Dorsolateral prefrontal cortex (tissue), 120 donors: ENCODE measurements at regions of chr15 and their contacts with region 1.

Region 1: DNA sequence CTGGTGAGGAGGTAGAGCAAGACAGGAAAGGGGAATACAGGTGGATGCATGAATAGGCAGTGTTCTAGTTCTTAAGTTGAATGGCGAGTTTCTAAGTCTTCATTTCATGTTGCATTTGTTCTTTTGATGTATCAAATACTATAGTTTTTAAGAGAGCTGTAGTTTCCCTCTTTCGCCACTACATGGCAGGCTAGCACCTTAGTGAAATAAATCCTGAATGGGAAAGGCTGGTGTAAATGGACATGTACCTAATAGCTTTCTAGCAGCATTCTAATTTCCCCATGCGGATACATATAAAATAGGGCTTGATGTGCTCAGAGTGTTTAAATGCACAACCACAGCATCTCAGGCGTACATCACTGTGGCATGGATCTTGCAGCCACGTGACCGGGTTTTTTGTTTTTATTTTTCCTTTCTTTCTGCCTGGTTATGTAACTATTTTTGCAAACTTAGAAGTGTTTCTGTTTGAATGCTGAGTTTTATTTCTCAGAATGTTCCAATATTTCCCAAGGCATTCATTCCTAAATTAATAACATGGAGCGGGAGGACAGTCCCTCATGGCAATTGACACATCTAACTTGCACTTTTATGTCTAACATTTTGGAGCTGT is 23.5 kb upstream of the CLN6 start:
- DNase-seq: peak in 2 of 10 donors; percentile 29 to 63
- H3K4me3 ChIP-seq: peak overlapping the region in 44 of 59 donors; percentile 17 to 63 (median 37)
- H3K27ac ChIP-seq: peak overlapping the region in 28 of 59 donors; percentile 1 to 70 (median 27)
- H3K27me3 ChIP-seq: no peaks in the 10 kb centered on the region
- CTCF ChIP-seq: peak; percentile 77 to 98 (median 92)

Region 2: DNA sequence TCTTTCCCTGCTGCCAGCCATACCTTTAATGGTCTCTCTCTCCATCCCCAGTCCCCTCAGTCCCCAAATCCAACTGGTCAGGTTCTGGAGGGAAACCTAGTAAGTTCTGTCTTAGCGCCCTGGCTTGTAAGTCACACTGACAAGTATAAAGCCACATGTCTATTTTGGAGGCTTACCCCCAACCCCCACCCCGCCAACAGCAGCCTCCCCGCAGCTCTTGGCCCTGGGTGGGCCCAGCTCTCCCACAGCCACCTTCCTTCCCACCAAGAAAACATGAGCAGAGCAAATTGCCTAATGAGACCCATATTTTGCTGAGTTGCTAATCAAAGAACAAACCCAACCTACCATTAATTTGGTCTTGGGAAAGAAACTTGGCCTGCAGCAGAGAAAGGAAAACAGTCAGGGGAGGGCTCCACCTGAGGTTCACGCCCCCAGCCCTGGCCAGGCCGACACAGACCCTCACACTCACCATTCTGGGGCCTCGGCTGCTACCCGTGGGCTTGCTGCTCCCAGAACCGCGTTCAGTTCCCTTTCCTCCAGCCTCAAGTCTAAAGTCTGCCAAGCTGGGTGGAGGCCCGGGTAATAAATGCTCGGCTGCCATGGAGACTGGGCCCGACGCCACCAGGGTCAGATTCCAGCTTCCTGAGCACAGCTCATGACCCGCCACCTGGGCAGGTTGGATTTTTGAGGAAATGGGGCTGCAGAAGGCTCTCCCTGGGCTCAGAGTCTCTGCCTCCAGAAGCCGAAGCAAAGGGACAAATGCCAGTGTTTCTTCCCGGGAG is 48.1 kb before region 1 on chr15 and contains the start of gene CALML4:
- intact Hi-C with region 1: no loop called
- DNase-seq: peak in 3 of 10 donors; percentile 42 to 84 (median 49)
- H3K4me3 ChIP-seq: peak within 1 kb of the TSS in 29 of 59 donors; percentile 1 to 42 (median 20)
- H3K27ac ChIP-seq: peak within 1 kb of the TSS in 6 of 59 donors; percentile 13 to 55 (median 31)
- H3K27me3 ChIP-seq: no peaks in the 10 kb centered on the region
- CTCF ChIP-seq: no peak
- total RNA-seq, gene CALML4: 1.2 to 12.9 (median 4.6) TPM

Region 3: GRCh38 chr15:68277603-68278344 is 24.7 kb after region 1 on chr15 and contains the start of gene FEM1B:
- intact Hi-C with region 1: loop called (anchors 1 to 2 kb)
- DNase-seq: peak; percentile 78 to 93 (median 88)
- H3K4me3 ChIP-seq: peak within 1 kb of the TSS; percentile 63 to 100 (median 94)
- H3K27ac ChIP-seq: peak within 1 kb of the TSS; percentile 95 to 100 (median 99)
- H3K27me3 ChIP-seq: no peaks in the 10 kb centered on the region
- CTCF ChIP-seq: peak in 25 of 56 donors; percentile 3 to 51 (median 22)
- total RNA-seq, gene FEM1B: 63.2 to 136 (median 101) TPM

Region 4: DNA sequence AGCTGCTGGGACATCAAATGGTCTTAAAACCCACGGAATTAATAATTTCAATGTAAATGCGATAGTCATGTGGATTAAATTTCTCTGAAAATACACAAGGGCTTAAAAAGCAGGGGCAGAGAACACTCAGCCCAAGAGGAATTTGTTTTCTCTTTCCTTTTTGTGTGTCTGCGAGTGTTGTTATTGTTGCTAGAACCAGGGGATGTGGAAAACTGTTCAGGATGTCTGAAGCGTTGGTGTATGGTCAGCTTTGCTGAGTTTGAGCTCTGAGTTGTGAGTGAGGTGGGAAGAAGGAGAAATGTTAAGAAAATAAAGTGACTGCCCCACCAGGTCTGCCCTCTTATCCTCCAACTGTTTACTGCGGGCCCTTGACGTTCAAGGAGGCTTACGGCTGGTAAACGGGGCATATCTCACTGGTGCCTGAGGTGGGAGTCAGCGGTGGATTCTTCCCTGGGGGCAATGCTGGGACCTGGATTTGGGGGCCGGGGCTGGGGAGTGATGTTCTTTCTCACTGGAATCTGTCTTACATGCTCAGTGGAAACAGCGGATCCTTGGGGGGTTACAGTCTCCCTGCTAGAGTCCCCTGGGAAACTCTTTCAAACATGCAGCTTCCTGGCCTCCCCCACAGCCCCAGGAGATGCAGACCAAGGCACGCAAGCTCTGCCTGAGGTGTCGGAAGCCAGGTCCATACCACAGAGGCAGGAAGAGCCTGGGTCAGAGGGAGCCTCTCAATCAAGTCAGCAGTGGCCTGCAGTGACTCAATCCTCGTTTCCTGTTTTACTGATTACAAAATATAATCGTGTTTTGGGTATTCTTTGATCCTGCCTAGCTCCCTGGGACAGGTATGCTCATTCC is 137.1 kb after region 1 on chr15:
- intact Hi-C with region 1: loop called in 1 of 2 experiments (anchors 5 kb)
- DNase-seq: peak in 2 of 10 donors; percentile 15 to 21
- H3K4me3 ChIP-seq: no peak overlapping the region
- H3K27ac ChIP-seq: no peak overlapping the region
- H3K27me3 ChIP-seq: peaks cover 0 to 15% (median 0%) of the 10 kb centered on the region in 45 donors
- CTCF ChIP-seq: no peak

Region 5: GRCh38 chr15:68924866-68925560 is 672.0 kb after region 1 on chr15:
- intact Hi-C with region 1: loop called in 1 of 2 experiments (anchors 10 kb)
- DNase-seq: peak; percentile 75 to 92 (median 84)
- H3K4me3 ChIP-seq: peak overlapping the region in 2 of 59 donors; percentile 10 to 25
- H3K27ac ChIP-seq: peak overlapping the region in 1 of 59 donors; percentile 5
- H3K27me3 ChIP-seq: no peaks in the 10 kb centered on the region
- CTCF ChIP-seq: peak; percentile 46 to 93 (median 84)